A673 (cell line): ENCODE measurements at regions of chr6 and their contacts with region 1.

Region 1: DNA sequence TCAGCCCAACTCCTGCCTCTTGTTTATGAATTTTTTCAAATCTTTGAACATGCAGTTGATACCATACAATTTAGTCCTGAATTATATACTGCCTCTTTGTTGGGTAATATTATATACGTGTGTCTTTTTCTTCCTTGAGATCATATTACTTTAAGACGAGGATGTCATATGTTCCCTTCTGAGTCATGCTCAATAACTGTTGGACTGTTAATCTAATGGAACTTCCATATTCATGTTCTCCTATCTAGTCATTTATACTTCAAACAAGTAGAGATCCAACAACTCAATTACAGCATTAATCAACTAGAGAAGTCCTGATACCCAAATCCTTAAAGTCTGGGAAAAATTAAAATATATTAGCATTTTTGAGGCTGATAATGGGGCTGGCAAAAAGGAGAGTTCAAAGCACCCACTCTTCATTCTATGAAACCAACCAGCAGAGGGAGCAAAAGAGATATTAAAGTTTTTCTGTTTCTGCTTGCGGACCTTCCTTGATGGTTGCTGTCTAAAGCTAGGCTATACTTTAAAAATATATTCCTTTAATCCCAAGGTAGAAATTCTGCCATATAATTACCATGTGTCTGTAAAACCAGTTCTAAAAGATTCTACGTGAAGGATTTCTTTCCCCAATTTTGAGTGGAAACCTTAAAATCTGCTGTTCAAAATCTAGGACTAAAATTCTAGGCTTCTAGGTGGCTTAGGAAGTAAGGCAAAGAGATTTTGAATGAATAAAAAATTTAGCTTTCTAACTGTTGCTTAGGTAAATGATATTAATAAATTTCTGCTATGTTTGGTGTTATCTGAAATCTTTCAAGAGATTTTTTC is 498.9 kb downstream of the BCKDHB start:
- DNase-seq: peak; percentile 74
- H3K4me3 ChIP-seq: no peak overlapping the region
- H3K27ac ChIP-seq: no peak overlapping the region
- H3K4me1 ChIP-seq: peaks cover 20% of the 10 kb centered on the region
- H3K27me3 ChIP-seq: no peaks in the 10 kb centered on the region
- CTCF ChIP-seq: peak; percentile 79

Region 2: DNA sequence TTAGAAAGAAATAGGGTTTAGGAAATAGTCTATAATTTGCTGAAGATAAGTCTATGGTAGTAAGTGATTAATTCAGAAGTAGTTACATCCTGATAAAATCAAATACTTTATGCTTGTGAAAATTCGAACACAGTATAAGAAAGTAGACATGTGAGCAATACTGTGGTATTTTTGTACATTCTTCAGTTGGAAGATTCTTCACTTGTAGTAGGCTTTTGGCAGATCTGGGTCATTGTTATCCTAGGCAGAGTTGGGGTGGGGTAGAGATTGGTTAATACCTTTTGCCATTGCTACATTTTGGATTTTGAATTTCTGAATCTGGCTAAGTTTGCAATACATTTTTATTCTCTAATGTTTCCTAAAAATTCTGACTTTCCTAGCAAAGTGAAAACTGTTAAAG is 301.4 kb before region 1 on chr6:
- CTCF ChIA-PET with region 1: no interaction called
- POLR2A ChIA-PET with region 1: no interaction called
- intact Hi-C with region 1: no loop called
- DNase-seq: no peak
- H3K4me3 ChIP-seq: no peak overlapping the region
- H3K27ac ChIP-seq: no peak overlapping the region
- H3K4me1 ChIP-seq: no peaks in the 10 kb centered on the region
- H3K27me3 ChIP-seq: no peaks in the 10 kb centered on the region
- CTCF ChIP-seq: no peak

Region 3: DNA sequence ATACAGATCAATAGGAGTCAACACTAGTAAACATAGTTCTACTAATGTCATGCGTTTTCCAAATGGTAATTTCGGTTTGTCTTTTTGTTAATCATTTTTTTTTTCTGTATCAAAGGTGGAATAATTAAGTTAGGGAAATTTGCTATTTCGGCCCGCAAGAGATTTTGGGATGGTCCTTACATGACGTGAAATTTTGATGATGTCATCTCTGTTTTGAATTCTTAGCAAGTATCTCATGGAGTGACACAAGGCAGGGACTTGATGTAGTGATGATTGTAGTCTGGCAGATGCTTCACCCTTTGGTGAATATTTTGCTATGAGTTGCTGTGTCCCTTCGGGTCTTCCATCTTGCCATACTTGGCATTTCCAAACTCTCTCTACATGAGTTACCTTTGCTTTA is 109.1 kb after region 1 on chr6:
- CTCF ChIA-PET with region 1: no interaction called
- POLR2A ChIA-PET with region 1: no interaction called
- intact Hi-C with region 1: no loop called
- DNase-seq: no peak
- H3K4me3 ChIP-seq: no peak overlapping the region
- H3K27ac ChIP-seq: no peak overlapping the region
- H3K4me1 ChIP-seq: no peaks in the 10 kb centered on the region
- H3K27me3 ChIP-seq: no peaks in the 10 kb centered on the region
- CTCF ChIP-seq: no peak

Region 4: DNA sequence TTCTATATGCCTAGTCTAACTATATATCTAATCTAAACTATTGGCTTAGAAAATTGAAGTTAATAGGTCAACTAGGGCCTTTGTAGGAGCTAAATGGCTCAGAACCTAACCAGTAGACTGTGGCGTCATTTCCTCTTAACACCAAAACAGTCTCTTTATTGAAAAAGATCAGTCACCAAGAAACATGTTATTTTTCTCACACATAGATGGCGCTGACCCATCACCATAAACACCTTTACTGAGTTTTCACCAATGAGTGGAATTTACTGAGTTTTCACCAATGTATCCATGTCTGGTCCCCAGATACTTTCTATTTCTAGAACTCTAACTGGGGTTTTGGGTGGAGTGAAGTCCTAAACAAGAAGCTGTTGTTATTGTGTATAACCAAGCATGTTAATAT is 137.1 kb after region 1 on chr6:
- CTCF ChIA-PET with region 1: no interaction called
- POLR2A ChIA-PET with region 1: no interaction called
- intact Hi-C with region 1: loop called (anchors 5 kb)
- DNase-seq: peak; percentile 85
- H3K4me3 ChIP-seq: no peak overlapping the region
- H3K27ac ChIP-seq: no peak overlapping the region
- H3K4me1 ChIP-seq: peaks cover 4% of the 10 kb centered on the region
- H3K27me3 ChIP-seq: no peaks in the 10 kb centered on the region
- CTCF ChIP-seq: peak; percentile 72

Region 5: DNA sequence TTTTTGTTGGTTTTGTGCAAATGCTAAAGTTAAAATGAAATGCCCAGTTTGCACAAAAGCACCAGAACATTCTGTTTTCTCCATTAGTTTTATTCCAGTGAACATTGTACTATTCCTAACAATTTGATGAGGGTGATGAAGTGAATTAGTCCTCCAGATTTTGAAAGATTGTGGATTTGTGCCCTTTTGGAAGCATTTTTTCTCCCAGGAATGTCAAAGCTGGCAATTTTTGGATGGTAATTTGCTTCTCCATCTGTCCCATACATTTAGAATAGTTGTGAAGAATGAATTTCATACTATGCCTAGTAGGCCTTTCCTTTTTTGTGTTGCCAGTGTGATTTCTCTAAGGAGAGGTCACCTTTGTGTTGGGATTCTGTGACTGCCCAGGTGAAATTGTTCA is 298.3 kb after region 1 on chr6:
- CTCF ChIA-PET with region 1: no interaction called
- POLR2A ChIA-PET with region 1: no interaction called
- intact Hi-C with region 1: no loop called
- DNase-seq: no peak
- H3K4me3 ChIP-seq: no peak overlapping the region
- H3K27ac ChIP-seq: no peak overlapping the region
- H3K4me1 ChIP-seq: no peaks in the 10 kb centered on the region
- H3K27me3 ChIP-seq: no peaks in the 10 kb centered on the region
- CTCF ChIP-seq: no peak

Region 6: DNA sequence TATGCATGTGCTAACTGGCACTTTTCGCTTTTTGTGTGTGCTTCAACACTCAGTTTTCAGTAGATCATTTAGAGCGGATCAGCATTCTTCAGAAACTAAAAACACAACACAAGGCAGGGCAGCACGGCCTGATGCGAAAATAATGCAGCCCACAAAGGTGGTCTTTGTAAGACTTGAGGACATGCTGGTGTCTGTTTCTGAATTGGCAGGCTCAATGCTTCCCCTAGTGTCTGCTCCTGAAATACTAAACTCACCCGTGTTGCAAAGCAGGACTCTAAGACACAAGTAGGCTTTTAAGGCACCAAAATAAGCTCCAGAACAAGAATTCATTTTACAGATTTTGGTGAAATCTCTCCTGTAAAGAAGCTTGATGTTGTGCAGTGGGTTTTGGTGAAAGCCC is 470.6 kb after region 1 on chr6:
- CTCF ChIA-PET with region 1: no interaction called
- POLR2A ChIA-PET with region 1: no interaction called
- intact Hi-C with region 1: loop called (anchors 10 kb)
- DNase-seq: peak; percentile 57
- H3K4me3 ChIP-seq: no peak overlapping the region
- H3K27ac ChIP-seq: no peak overlapping the region
- H3K4me1 ChIP-seq: no peaks in the 10 kb centered on the region
- H3K27me3 ChIP-seq: peaks cover 8% of the 10 kb centered on the region
- CTCF ChIP-seq: peak; percentile 79

Region 7: DNA sequence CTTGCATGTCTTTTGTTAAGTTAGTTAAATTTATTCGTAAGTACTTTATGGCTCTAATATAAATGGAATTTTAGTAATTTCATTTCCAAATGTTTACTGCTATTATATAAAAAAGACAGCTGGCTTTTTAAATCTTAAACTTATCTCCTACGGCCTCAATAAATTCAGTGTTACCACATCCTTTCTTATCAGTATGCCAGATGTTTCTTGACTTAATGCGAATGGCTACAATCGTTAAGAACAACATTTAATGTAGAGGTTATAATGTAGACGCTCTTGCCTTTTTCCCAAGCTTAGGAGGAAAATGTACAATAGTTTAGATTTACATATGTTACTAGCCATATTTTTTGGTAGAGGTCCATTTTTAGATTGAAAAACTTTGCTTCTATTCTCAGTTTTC is 487.7 kb after region 1 on chr6:
- CTCF ChIA-PET with region 1: no interaction called
- POLR2A ChIA-PET with region 1: no interaction called
- intact Hi-C with region 1: no loop called
- DNase-seq: no peak
- H3K4me3 ChIP-seq: no peak overlapping the region
- H3K27ac ChIP-seq: no peak overlapping the region
- H3K4me1 ChIP-seq: no peaks in the 10 kb centered on the region
- H3K27me3 ChIP-seq: no peaks in the 10 kb centered on the region
- CTCF ChIP-seq: no peak

Region 8: GRCh38 chr6:81981812-81982211 is 1376.4 kb after region 1 on chr6:
- CTCF ChIA-PET with region 1: no interaction called
- POLR2A ChIA-PET with region 1: no interaction called
- intact Hi-C with region 1: loop called (anchors 10 kb)
- DNase-seq: peak; percentile 11
- H3K4me3 ChIP-seq: no peak overlapping the region
- H3K27ac ChIP-seq: no peak overlapping the region
- H3K4me1 ChIP-seq: peaks cover 7% of the 10 kb centered on the region
- H3K27me3 ChIP-seq: no peaks in the 10 kb centered on the region
- CTCF ChIP-seq: no peak

Region 9: DNA sequence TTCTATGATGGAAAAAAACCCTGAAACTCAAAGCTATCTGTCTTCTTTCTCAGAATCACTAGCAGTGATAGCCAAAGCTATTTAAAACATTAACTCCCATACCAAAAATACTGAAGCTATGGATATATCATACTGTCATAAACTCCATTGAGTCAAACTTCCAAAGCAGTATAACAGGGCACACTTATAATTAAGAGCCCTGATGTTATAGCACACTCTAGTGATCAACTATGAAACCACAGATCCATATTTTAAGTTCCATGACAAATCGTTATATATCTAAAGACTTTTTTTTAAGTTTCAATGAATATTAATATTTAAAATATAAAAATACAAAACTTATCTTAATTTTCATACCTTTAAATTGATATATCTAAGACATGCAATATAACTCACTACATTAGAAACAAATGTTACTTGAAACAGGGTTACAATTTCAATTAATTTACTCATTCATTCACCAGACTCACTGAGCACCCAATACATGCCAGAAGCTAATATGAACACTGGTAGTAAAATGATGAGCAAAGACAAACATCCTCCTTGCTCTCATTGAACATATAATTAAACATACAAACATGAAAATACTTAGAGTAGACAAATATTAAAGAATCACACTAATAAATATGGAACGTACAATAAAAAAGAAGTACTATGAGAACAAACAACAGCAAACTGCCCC is 1572.8 kb after region 1 on chr6:
- CTCF ChIA-PET with region 1: no interaction called
- POLR2A ChIA-PET with region 1: no interaction called
- intact Hi-C with region 1: loop called (anchors 10 kb)
- DNase-seq: peak; percentile 74
- H3K4me3 ChIP-seq: no peak overlapping the region
- H3K27ac ChIP-seq: no peak overlapping the region
- H3K4me1 ChIP-seq: peaks cover 48% of the 10 kb centered on the region
- H3K27me3 ChIP-seq: no peaks in the 10 kb centered on the region
- CTCF ChIP-seq: peak; percentile 78